Activated CD4-positive, alpha-beta T cell treated with anti-CD3 and anti-CD28 coated beads for 36 hours (primary cell): ENCODE measurements at regions of chr2 and their contacts with region 1.

Region 1: DNA sequence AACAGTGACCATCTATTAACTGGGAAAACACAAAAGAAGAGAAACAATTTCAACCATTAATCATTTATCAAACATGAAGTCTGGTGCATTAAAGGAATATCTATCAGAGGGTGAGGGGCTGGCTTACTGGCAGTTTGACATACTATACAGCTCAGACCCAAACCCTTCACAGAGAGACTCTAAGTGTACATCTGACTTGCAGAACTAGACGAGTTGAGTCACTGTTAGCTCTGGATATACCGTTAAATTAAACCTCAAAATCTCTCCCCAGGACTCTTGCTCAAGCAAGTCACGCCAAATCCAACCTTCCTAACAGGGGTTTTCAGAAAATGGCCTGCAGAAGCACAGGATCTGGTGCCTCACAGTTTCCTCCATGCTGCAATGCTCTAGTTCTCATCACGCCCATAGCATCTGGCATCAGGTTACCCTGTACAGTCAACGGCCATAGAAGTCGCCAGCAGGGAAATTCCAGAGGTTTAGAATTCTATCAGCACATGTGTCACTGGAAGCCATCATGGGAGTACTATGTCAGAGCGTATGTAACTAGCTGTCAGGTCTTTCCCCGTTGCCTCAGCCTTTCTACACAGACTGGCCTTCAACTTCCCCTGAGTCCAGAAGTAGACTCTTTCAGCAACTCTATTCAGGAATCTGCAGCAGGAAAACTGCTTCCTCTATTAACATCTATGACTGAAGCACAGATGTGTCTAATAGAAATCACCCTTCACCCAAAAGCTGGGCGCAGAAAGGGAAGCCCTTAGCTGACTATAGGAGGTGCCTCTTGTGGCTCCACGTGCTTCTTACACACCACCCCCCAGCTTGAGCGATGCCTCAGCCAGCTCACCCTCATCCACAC is 9.3 kb downstream of the TGOLN2 start:
- DNase-seq: peak; percentile 70
- ATAC-seq: peak; percentile 88
- H3K4me3 Mint-ChIP-seq: peak overlapping the region; percentile 4
- H3K27ac Mint-ChIP-seq: peak overlapping the region; percentile 80
- H3K4me1 Mint-ChIP-seq: peaks cover 58% of the 10 kb centered on the region
- H3K27me3 Mint-ChIP-seq: no peaks in the 10 kb centered on the region

Region 2: DNA sequence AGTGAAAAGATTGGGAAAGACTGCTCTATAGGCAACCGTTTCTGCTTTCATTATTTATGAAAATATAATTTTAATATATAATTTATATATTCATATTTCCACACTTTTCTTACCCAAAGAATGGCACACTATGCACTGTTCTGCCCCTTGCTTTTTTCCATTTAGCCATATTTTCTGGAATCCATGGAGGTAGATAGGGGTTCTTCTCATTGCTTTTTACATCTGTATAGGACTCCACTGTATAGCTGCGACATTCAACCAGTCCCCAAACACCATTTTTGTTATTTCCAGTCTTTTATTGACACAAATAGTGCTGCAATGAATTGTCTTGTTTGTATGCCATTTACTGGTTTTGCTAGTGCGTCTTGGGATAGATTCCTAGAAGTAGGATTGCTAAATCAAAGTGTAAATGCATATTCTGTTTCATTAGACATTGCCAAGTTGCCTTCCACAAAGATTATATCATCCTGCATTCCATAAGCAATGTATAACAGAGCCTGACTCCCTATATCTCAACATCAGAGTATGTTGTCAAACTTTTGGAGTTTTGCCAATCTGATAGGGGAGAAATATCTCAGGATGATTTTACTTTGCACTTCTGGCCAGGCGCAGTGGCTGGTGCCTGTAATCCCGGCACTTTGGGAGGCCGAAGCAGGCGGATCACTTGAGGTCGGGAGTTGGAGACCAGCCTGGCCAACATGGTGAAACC is 211.8 kb before region 1 on chr2:
- CTCF ChIA-PET with region 1: no interaction called
- POLR2A ChIA-PET with region 1: interaction called, 10 read pairs
- intact Hi-C with region 1: no loop called
- DNase-seq: no peak
- ATAC-seq: no peak
- H3K4me3 Mint-ChIP-seq: no peak overlapping the region
- H3K27ac Mint-ChIP-seq: no peak overlapping the region
- H3K4me1 Mint-ChIP-seq: no peaks in the 10 kb centered on the region
- H3K27me3 Mint-ChIP-seq: peaks cover 7% of the 10 kb centered on the region

Region 3: DNA sequence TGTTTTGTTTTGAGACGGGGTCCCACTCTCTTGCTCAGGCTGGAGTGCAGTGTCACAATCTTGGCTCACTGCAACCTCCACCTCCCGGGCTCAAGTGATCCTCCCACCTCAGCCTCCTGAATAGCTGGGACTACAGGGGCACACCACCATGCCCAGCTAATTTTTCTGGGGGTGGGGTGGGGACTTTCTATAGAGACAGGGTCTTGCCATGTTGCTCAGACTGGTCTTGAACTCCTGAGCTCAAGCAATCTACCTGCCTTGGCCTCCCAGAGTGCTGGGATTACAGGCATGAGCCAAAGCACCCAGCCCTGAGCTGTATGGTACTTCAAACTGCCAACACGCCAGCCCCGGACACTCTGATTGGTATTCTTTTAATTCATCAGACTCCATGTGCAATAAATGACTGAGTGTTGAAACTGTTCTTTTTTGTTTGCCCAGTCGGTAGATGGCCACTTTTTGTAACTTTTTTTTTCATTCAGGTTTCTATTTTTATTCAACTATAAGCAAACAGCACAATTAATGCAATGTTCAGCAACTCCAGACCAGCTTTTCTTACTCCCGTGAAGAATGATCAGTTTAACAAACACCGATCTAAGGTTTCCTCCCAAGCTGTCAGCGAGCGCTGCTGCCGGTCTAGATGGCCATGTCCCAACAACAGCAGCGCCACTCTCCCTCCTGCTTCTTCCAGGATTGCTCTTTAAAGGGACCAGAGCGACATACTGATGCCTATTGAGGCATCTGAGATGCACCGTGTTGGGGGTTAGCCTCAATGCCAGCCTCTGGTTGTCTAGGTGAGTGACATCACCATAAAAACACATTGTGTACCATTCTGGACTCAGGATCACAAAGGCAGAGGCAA is 21.8 kb after region 1 on chr2:
- CTCF ChIA-PET with region 1: no interaction called
- POLR2A ChIA-PET with region 1: no interaction called
- intact Hi-C with region 1: loop called (anchors 1 kb)
- DNase-seq: no peak
- ATAC-seq: no peak
- H3K4me3 Mint-ChIP-seq: no peak overlapping the region
- H3K27ac Mint-ChIP-seq: no peak overlapping the region
- H3K4me1 Mint-ChIP-seq: no peaks in the 10 kb centered on the region
- H3K27me3 Mint-ChIP-seq: no peaks in the 10 kb centered on the region

Region 4: DNA sequence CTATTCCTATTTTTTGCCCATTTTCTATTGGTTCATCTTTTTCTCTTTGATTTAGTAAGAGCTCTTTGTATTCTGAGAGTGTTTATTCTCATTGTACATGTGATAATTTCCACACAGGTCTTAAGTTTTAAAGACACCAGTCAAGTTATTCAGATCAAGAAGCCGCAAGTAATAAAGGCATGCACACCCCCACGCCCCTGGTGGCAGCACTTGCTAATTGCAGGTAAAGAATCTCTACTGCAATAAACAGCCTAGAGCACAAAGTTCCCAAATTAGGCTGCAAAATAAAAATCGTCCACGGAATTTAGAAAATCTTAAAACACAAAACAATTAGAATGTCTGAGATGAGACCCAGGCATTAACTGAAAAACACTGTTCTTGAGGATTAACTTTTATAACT is 525.1 kb after region 1 on chr2:
- CTCF ChIA-PET with region 1: no interaction called
- POLR2A ChIA-PET with region 1: no interaction called
- intact Hi-C with region 1: no loop called
- DNase-seq: peak; percentile 71
- ATAC-seq: peak; percentile 49
- H3K4me3 Mint-ChIP-seq: no peak overlapping the region
- H3K27ac Mint-ChIP-seq: no peak overlapping the region
- H3K4me1 Mint-ChIP-seq: peaks cover 5% of the 10 kb centered on the region
- H3K27me3 Mint-ChIP-seq: no peaks in the 10 kb centered on the region